ENCODE measurements at regions of chr10 and their contacts with region 1.

Region 1: GRCh38 chr10:4767033-4767814 is 58.8 kb upstream of the AKR1E2 start:
- DNase-seq: no peak
- H3K4me3 ChIP-seq: no peak overlapping the region
- H3K27ac ChIP-seq: no peak overlapping the region
- H3K4me1 ChIP-seq: peaks cover 0 to 3% (median 0%) of the 10 kb centered on the region in 4 experiments; a peak in 1 of 7 replicates
- H3K27me3 ChIP-seq: no peaks in the 10 kb centered on the region
- CTCF ChIP-seq: peak in 2 of 3 experiments; percentile 45 to 51; a peak in 2 of 4 replicates
- EP300 ChIP-seq: no peak
- POLR2A ChIP-seq: no peak
- RAD21 ChIP-seq: peak; percentile 72 to 77

Region 2: DNA sequence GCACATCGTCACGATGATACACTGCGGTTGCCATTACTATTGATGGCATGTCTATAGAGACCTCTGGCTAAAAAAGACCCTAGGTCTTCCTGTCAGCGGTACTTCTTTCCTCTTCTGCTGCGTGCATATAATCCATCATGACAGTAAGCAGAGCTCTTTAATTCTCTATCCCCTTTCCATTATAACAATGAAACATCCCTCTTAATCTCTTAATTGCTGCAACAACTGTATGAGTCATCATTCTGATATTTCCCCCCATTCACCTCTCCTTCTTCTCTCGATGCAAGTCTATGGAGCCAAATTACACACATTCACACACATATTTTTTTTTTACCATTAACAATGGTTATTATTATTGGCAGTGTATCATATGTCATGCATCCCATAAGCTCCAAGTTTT is 13.6 kb after region 1 on chr10:
- CTCF ChIA-PET with region 1: interaction called, 11 read pairs
- POLR2A ChIA-PET with region 1: no interaction called
- DNase-seq: no peak
- H3K4me3 ChIP-seq: no peak overlapping the region
- H3K27ac ChIP-seq: no peak overlapping the region
- H3K4me1 ChIP-seq: no peaks in the 10 kb centered on the region
- H3K27me3 ChIP-seq: no peaks in the 10 kb centered on the region
- CTCF ChIP-seq: no peak
- EP300 ChIP-seq: no peak
- POLR2A ChIP-seq: no peak
- RAD21 ChIP-seq: no peak

Measured in H1 (cell line).